ENCODE measurements at regions of chr1 and their contacts with region 1.

Region 1: GRCh38 chr1:27300341-27301051 is 21.5 kb upstream of the TMEM222 start:
- DNase-seq: peak; percentile 83
- H3K4me3 ChIP-seq: no peak overlapping the region
- H3K27ac ChIP-seq: peak overlapping the region; percentile 70
- H3K4me1 ChIP-seq: no peaks in the 10 kb centered on the region
- H3K27me3 ChIP-seq: no peaks in the 10 kb centered on the region
- CTCF ChIP-seq: peak; percentile 99

Region 2: DNA sequence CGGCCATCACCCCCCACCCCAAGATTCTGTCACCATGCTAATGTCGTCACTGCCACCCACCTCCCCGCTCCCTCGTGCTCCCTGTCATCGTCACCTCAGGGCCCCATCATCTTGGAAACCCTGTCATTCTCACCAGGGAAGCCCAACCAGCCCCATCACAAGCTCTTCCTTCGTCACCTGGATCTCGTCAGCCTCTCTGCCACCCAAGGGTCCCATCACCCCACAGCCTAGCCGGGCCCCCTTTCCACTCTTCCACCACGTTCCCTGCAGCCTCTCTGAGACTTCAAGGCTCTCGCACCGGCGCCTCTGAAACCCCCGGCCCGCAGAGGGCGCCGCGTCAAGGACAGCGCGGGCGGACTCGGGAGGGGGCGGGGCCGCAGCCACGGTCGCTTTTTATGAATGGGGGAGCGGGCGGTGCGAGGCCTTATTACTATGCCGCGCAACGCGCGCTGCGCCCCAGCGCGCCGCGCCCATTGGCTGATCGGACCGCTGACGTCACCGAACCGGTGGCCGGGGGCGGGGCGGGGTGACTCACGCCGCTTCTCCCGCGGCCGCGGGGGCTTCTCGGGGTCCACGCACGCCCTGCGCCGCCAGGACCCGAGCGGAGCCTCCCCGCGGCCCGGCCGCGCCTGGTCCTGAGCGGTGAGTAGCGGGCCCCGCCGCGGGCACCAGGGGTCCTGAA is 91.7 kb after region 1 on chr1 and contains the start of gene GPR3:
- intact Hi-C with region 1: loop called (anchors 2 kb)
- DNase-seq: peak; percentile 93
- H3K4me3 ChIP-seq: peak within 1 kb of the TSS; percentile 58
- H3K27ac ChIP-seq: no peak within 1 kb of the TSS
- H3K4me1 ChIP-seq: peaks cover 5% of the 10 kb centered on the region
- H3K27me3 ChIP-seq: no peaks in the 10 kb centered on the region
- CTCF ChIP-seq: peak; percentile 27
- total RNA-seq, gene GPR3: 0.32 to 0.49 TPM

Region 3: GRCh38 chr1:27643701-27644625 is 343.5 kb after region 1 on chr1:
- intact Hi-C with region 1: loop called (anchors 10 kb)
- DNase-seq: peak; percentile 55
- H3K4me3 ChIP-seq: no peak overlapping the region
- H3K27ac ChIP-seq: no peak overlapping the region
- H3K4me1 ChIP-seq: no peaks in the 10 kb centered on the region
- H3K27me3 ChIP-seq: no peaks in the 10 kb centered on the region
- CTCF ChIP-seq: peak; percentile 88